ENCODE measurements at regions of chr19 and their contacts with region 1.

Region 1: DNA sequence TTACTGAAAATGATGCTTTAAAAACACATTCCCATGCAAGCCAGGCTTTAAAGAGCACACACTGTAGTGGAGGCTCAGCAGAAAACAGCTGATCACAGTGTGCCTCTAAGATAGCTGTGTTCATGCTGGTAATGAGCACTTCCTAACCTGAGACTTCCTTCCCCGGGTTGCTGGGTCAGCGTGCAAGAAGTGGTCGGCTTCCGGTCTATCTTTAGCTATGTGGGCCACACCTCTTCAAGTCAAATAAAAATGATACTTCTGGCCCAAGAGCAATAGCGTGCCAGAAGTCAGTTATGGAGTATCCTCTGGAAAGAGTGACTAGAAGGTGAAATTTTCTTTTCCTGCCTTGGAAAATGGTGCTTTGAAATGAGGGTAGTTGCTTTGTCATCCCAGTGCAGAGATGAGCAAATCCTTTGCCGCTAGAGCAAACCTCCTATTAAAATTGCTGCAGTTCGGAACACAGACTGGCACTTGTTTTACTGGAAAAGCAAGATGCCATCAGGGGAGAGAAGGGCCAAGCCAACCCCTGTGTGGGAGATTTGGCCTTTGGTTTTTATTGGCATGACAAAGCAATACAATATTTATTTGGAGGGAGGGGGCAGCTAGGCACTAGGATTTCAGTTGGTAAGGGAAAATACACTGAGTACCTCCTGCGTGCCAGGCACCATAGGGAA is 64.2 kb downstream of the ARHGAP35 start:
- DNase-seq: peak in 1 of 2 donors; percentile 27
- ATAC-seq: peak; percentile 44 to 80 (median 70)
- H3K4me3 ChIP-seq: peak overlapping the region in 1 of 10 donors; percentile 4
- H3K27ac ChIP-seq: peak overlapping the region in 9 of 10 donors; percentile 22 to 80 (median 54)
- H3K4me1 ChIP-seq: peaks cover 13 to 68% (median 60%) of the 10 kb centered on the region in 9 donors
- H3K27me3 ChIP-seq: no peaks in the 10 kb centered on the region
- CTCF ChIP-seq: no peak

Region 2: DNA sequence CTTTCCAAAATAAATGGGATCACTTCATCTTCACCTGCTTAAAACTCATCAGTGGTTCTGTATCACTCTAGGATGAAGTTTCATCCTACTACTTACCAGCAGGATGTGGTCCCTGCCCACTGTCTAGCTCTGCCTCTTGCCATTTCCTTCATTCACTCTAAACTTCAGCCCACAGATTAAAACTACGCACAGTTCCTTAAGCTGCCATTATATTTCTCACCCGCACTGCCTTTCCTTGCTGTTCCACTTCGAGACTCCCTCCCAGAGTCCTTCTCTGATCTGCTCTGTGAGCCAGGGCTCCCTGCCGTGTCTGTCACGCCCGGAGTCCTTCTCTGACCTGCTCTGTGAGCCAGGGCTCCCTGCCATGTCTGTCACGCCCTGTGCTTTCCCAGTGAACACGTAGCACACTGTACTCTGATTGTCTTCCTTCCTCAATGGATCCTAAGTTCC is 42.6 kb after region 1 on chr19:
- intact Hi-C with region 1: loop called in 2 of 10 experiments (anchors 5 kb)
- DNase-seq: peak; percentile 77
- ATAC-seq: peak; percentile 80 to 94 (median 88)
- H3K4me3 ChIP-seq: peak overlapping the region in 1 of 10 donors; percentile 7
- H3K27ac ChIP-seq: peak overlapping the region; percentile 40 to 91 (median 66)
- H3K4me1 ChIP-seq: peaks cover 14 to 74% (median 48%) of the 10 kb centered on the region in 9 donors
- H3K27me3 ChIP-seq: no peaks in the 10 kb centered on the region
- CTCF ChIP-seq: no peak

Region 3: DNA sequence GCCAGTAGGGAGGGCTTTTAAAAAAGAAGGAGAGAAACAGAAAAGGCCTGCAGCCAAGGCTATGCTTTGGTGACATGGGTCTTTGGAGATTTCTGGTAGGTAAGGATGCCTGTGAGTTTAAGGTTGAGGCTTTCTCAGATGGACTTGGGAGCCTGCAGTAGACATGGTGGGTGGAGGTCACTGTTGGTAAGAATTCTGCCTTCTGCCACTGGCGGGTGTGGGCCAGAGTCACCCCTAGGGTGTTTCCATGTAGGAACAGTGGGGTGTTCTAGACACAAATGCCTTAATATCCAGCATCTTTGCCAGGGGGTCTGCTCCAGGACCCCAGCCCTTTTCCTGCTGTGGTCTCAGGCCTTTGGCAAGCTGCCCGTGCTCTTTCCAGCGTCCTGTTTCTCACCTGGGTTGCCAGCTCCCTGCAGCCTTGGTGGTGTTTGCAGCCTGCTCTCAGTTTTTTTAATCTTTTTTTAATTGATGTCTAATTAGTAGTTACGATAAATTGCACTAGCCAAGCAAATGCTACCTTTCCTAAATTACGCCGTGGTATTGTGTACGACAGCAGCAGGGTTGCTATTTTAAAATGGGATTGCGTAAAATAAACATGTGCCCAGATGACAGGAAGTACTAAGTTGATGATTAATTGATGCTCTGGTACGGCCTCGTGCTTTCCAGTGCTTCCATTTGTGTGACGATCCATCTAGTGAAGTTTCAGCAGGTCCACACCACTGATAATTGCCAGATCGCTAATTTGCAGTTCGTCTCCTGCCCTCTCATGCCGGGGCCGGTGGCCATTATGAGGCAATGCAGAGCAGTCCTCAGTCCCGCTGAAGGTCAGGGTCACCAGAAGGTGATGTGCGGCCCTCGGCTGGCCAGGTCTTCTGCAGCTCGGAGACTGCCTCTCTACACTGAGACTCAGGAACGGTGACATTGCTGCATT is 59.3 kb after region 1 on chr19:
- intact Hi-C with region 1: loop called in 3 of 10 experiments (anchors 5 to 10 kb)
- DNase-seq: peak in 1 of 2 donors; percentile 42
- ATAC-seq: peak in 7 of 8 donors; percentile 50 to 88 (median 76)
- H3K4me3 ChIP-seq: no peak overlapping the region
- H3K27ac ChIP-seq: peak overlapping the region; percentile 44 to 84 (median 78)
- H3K4me1 ChIP-seq: peaks cover 14 to 82% (median 64%) of the 10 kb centered on the region in 9 donors
- H3K27me3 ChIP-seq: no peaks in the 10 kb centered on the region
- CTCF ChIP-seq: no peak

Measured in heart right ventricle (tissue), 16 donors.